Panc1 (cell line): ENCODE measurements at regions of chr7 and their contacts with region 1.

Region 1: GRCh38 chr7:117715784-117716445 is 157.3 kb downstream of the CTTNBP2 start:
- DNase-seq: peak; percentile 42
- ATAC-seq: peak; percentile 84
- H3K4me3 ChIP-seq: no peak overlapping the region
- H3K27ac ChIP-seq: no peak overlapping the region
- H3K4me1 ChIP-seq: no peaks in the 10 kb centered on the region
- H3K27me3 ChIP-seq: peaks cover 3% of the 10 kb centered on the region; the same call in 1 of the 2 replicates
- CTCF ChIP-seq: peak; percentile 76

Region 2: GRCh38 chr7:117399820-117400422 is 316.0 kb before region 1 on chr7:
- CTCF ChIA-PET with region 1: no interaction called
- POLR2A ChIA-PET with region 1: no interaction called
- in situ Hi-C with region 1: no loop called
- intact Hi-C with region 1: loop called (anchors 2 kb)
- DNase-seq: no peak
- ATAC-seq: no peak
- H3K4me3 ChIP-seq: no peak overlapping the region
- H3K27ac ChIP-seq: no peak overlapping the region
- H3K4me1 ChIP-seq: no peaks in the 10 kb centered on the region
- H3K27me3 ChIP-seq: 0 out of 2 replicates have a peak, but pooled peaks cover 3% of the 10 kb centered on the region
- CTCF ChIP-seq: peak; percentile 53; the same call in 1 of the 2 replicates

Region 3: GRCh38 chr7:117459735-117460134 is 256.2 kb before region 1 on chr7:
- CTCF ChIA-PET with region 1: interaction called, 7 read pairs
- POLR2A ChIA-PET with region 1: no interaction called
- in situ Hi-C with region 1: no loop called
- intact Hi-C with region 1: loop called (anchors 2 kb)
- DNase-seq: no peak
- ATAC-seq: no peak
- H3K4me3 ChIP-seq: no peak overlapping the region
- H3K27ac ChIP-seq: no peak overlapping the region
- H3K4me1 ChIP-seq: no peaks in the 10 kb centered on the region
- H3K27me3 ChIP-seq: no peaks in the 10 kb centered on the region
- CTCF ChIP-seq: no peak